ENCODE measurements at regions of chr11 and their contacts with region 1.

Region 1: DNA sequence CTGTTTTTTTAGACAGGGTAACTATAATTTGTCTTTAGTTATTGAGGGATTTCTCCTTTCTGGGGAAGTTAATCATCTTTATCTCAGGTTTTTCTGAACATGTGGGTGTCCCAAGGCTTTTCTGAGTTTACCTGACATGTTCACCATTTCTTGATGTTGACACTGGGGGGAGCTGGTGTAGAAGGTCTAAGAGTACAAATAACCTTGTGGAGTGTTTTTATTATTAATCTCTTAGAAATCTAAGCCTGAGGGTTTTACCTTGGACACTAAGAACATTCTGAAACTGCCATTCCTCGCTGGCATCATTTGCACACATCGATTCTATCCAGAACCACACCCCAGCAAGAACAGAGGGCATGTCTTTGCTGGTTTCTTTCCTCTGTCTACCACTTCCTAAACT is 15.6 kb upstream of the C11orf91 start:
- DNase-seq: no peak
- H3K4me3 ChIP-seq: no peak overlapping the region
- H3K27ac ChIP-seq: no peak overlapping the region
- H3K4me1 ChIP-seq: peaks cover 0 to 2% of the 10 kb centered on the region in 2 donors
- H3K27me3 ChIP-seq: no peaks in the 10 kb centered on the region
- CTCF ChIP-seq: peak in 2 of 3 experiments; percentile 9 to 33

Region 2: GRCh38 chr11:32829680-32830412 is 886.4 kb before region 1 on chr11 and contains the start of gene PRRG4:
- intact Hi-C with region 1: loop called (anchors 5 kb)
- DNase-seq: peak in 1 of 2 donors; percentile 12
- H3K4me3 ChIP-seq: peak within 1 kb of the TSS; percentile 43 to 65
- H3K27ac ChIP-seq: no peak within 1 kb of the TSS
- H3K4me1 ChIP-seq: peaks cover 0 to 2% of the 10 kb centered on the region in 2 donors
- H3K27me3 ChIP-seq: no peaks in the 10 kb centered on the region
- CTCF ChIP-seq: no peak
- total RNA-seq, gene PRRG4: 3.0 TPM